Breast epithelium (tissue), 4 donors: ENCODE measurements at regions of chr7 and their contacts with region 1.

Region 1: GRCh38 chr7:74521855-74522254 is 68.1 kb downstream of the GTF2IRD1 start:
- DNase-seq: no peak
- H3K4me3 ChIP-seq: no peak overlapping the region
- H3K27ac ChIP-seq: no peak overlapping the region
- H3K4me1 ChIP-seq: no peaks in the 10 kb centered on the region
- H3K27me3 ChIP-seq: no peaks in the 10 kb centered on the region
- CTCF ChIP-seq: no peak
- POLR2A ChIP-seq: no peak

Region 2: DNA sequence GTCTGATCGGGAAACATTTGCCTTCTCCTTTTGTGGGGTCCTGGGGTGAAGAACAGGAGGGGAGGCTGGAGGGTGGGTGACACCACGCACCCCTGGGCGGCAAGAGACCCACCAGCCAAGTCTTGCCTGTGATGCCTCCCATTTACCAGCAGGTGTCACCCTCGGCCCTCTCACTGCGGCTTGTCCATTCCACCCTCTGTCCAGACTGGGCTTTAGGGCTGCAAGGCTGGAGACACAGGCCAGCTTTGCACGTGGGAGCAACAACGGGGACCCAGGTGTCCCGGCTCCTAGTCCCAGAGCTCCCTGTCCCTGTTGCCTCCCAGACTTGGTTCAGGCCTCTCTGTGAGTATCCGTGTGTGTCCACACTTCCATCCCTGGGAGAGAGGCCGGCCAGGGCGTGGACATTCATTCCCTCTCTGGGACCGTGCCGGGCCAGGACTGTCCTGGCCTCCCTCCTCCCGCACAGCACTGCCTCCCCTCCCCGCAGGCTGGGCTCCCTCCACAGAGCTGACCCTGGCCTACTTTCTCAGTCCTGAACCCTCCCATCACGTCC is 104.4 kb before region 1 on chr7:
- intact Hi-C with region 1: no loop called
- DNase-seq: peak; percentile 39 to 74
- H3K4me3 ChIP-seq: no peak overlapping the region
- H3K27ac ChIP-seq: no peak overlapping the region
- H3K4me1 ChIP-seq: no peaks in the 10 kb centered on the region
- H3K27me3 ChIP-seq: no peaks in the 10 kb centered on the region
- CTCF ChIP-seq: peak; percentile 83 to 97 (median 97)
- POLR2A ChIP-seq: no peak

Region 3: DNA sequence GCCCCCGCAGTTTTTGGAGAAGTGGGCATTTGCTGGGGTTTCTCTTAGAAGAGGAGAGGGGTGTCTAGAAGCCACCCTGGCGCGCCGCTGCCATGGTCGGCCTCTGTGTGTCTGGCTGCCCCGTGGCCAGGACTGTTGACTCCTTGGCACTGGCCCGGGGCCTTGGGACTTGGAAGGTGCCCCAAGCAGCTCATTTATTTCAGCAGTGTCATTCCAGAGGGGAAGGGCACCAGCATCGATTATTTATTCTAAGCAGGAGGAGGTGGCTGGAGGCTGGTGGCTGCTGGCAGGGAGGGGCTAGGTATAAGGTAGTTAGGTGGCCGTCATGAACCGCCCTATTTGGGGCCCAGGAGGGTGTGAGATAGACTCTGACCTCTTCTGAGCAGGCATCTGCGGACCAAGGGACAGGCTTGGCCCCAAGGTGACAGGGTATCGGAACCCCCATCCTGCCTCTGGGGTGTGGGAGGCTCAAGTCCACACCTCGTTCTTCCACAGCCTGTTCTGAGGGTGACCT is 66.5 kb before region 1 on chr7:
- intact Hi-C with region 1: loop called (anchors 5 kb)
- DNase-seq: peak; percentile 41 to 69
- H3K4me3 ChIP-seq: peak overlapping the region in 2 of 3 donors; percentile 79 to 95
- H3K27ac ChIP-seq: peak overlapping the region; percentile 90 to 93
- H3K4me1 ChIP-seq: no peaks in the 10 kb centered on the region
- H3K27me3 ChIP-seq: no peaks in the 10 kb centered on the region
- CTCF ChIP-seq: no peak
- POLR2A ChIP-seq: no peak